ENCODE measurements at regions of chr14 and their contacts with region 1.

Region 1: GRCh38 chr14:75069045-75069810 is at the start of gene ZC2HC1C:
- DNase-seq: peak; percentile 94 to 97
- H3K4me3 ChIP-seq: peak within 1 kb of the TSS; percentile 54
- H3K4me3 Mint-ChIP-seq: no peak within 1 kb of the TSS
- H3K27ac Mint-ChIP-seq: no peak within 1 kb of the TSS
- H3K4me1 ChIP-seq: peaks cover 5% of the 10 kb centered on the region
- H3K4me1 Mint-ChIP-seq: peaks cover 6% of the 10 kb centered on the region
- H3K27me3 ChIP-seq: no peaks in the 10 kb centered on the region
- H3K27me3 Mint-ChIP-seq: no peaks in the 10 kb centered on the region
- CTCF ChIP-seq: no peak
- total RNA-seq, gene ZC2HC1C: 2.5 and 3.8 TPM in 2 replicates

Region 2: GRCh38 chr14:75011356-75011994 is 57.8 kb before region 1 on chr14:
- CTCF ChIA-PET with region 1: no interaction called
- POLR2A ChIA-PET with region 1: no interaction called
- intact Hi-C with region 1: no loop called
- DNase-seq: no peak
- H3K4me3 ChIP-seq: no peak overlapping the region
- H3K4me3 Mint-ChIP-seq: no peak overlapping the region
- H3K27ac Mint-ChIP-seq: no peak overlapping the region
- H3K4me1 ChIP-seq: no peaks in the 10 kb centered on the region
- H3K4me1 Mint-ChIP-seq: no peaks in the 10 kb centered on the region
- H3K27me3 ChIP-seq: no peaks in the 10 kb centered on the region
- H3K27me3 Mint-ChIP-seq: no peaks in the 10 kb centered on the region
- CTCF ChIP-seq: no peak

Region 3: DNA sequence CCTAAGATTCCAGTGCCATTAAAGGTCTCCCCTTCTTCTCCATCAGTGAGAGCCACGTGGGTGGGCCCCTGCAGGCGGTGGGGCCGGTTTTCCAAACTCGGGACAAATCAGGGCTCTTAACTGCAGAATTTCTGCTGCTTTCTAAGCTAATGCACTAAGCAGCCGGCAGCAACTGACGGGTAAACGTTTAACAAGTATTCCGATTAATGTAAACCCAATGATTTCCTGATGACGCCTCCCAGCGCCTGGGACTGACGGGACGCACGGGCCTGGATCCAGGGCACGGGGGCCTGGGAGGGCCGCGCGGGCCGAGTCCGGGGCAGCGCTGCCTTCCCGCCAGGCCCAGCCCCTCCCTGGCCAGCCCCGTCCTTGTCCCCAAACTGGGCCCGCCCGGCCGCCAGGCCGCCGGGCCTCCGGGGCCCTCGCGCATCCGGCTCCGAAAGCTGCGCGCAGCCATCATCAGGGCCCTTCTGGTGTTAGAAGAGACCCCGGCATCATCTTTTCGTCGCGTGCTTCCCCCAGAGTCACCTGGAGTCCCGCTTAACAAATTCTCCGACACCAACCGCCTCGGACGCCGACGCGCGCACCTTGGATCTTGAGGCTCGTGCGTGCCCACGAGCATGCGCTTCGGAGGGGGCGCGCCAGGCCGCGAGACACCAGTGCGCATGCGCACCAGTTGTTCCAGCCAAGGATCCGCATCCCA is 18.2 kb before region 1 on chr14 and contains the start of gene MLH3:
- CTCF ChIA-PET with region 1: interaction called, 3 read pairs
- POLR2A ChIA-PET with region 1: interaction called, 4 read pairs
- intact Hi-C with region 1: loop called (anchors 2 kb)
- DNase-seq: peak; percentile 88 to 90
- H3K4me3 ChIP-seq: peak within 1 kb of the TSS; percentile 62
- H3K4me3 Mint-ChIP-seq: peak within 1 kb of the TSS; percentile 85
- H3K27ac Mint-ChIP-seq: peak within 1 kb of the TSS; percentile 86
- H3K4me1 ChIP-seq: peaks cover 10% of the 10 kb centered on the region
- H3K4me1 Mint-ChIP-seq: peaks cover 5% of the 10 kb centered on the region
- H3K27me3 ChIP-seq: no peaks in the 10 kb centered on the region
- H3K27me3 Mint-ChIP-seq: no peaks in the 10 kb centered on the region
- CTCF ChIP-seq: no peak
- total RNA-seq, gene MLH3: 23.2 and 24.5 TPM in 2 replicates

Region 4: DNA sequence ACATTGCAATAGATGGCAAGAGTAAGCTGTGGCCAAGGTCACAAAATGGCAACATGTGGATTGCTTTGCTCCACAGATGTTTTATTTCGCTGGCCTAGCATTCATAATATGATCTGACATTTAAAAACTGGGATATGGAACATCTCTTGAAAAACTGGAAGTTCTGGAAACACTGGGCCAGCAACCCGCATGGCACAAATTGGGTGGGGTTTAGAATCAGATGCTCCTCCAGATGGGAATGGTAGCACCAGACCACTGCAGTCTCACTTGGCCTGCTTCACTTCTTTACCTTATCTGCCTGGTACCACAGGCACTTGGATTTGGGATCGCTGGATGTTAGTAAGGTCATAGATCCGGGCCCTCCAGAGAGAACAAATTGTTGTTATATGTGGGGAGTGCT is 10.3 kb after region 1 on chr14:
- CTCF ChIA-PET with region 1: interaction called, 4 read pairs
- POLR2A ChIA-PET with region 1: interaction called, 13 read pairs
- intact Hi-C with region 1: no loop called
- DNase-seq: no peak
- H3K4me3 ChIP-seq: no peak overlapping the region
- H3K4me3 Mint-ChIP-seq: no peak overlapping the region
- H3K27ac Mint-ChIP-seq: no peak overlapping the region
- H3K4me1 ChIP-seq: no peaks in the 10 kb centered on the region
- H3K4me1 Mint-ChIP-seq: no peaks in the 10 kb centered on the region
- H3K27me3 ChIP-seq: no peaks in the 10 kb centered on the region
- H3K27me3 Mint-ChIP-seq: no peaks in the 10 kb centered on the region
- CTCF ChIP-seq: no peak

Region 5: GRCh38 chr14:75223664-75224154 is 154.5 kb after region 1 on chr14:
- CTCF ChIA-PET with region 1: no interaction called
- POLR2A ChIA-PET with region 1: no interaction called
- intact Hi-C with region 1: no loop called
- DNase-seq: peak in 1 of 2 experiments; percentile 32
- H3K4me3 ChIP-seq: no peak overlapping the region
- H3K4me3 Mint-ChIP-seq: no peak overlapping the region
- H3K27ac Mint-ChIP-seq: peak overlapping the region; percentile 16
- H3K4me1 ChIP-seq: peaks cover 10% of the 10 kb centered on the region
- H3K4me1 Mint-ChIP-seq: peaks cover 22% of the 10 kb centered on the region
- H3K27me3 ChIP-seq: no peaks in the 10 kb centered on the region
- H3K27me3 Mint-ChIP-seq: no peaks in the 10 kb centered on the region
- CTCF ChIP-seq: no peak